ENCODE measurements at regions of chr3 and their contacts with region 1.

Region 1: DNA sequence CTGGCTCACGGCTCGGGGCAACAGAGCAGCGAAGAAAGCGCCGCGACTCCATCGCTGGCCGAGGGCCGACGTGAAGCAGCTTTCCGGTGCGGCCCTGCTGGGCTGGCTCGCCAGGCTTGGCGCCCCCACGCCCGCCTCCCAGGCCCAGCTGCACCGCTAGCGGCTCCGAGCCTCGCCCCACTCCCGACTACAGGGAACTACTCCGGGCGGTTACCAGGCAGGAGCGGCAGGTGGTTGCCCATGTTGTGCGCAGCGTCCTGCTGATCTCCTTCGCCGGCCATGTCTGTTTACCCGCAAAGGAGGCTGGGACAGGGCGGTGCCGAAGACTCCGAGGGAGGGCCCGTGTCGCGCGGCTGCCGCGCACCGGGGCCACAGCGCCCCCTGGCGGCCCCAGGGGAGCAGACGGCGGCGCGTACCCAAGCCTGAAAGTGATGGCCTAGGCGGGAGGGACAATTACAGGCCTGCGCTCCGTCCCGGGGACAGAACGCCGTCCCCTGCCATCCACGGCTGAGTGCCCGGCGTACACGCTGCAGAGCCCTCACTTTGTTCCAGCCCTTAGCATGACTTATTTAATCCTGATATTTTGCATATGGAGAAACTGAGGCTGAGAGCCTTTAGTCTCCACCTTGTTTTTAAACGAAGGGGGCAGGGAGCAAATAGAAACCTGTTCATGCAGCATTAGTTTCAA is at the start of gene CRBN:
- DNase-seq: peak; percentile 80 to 94 (median 88)
- ATAC-seq: peak; percentile 97
- H3K4me3 Mint-ChIP-seq: peak within 1 kb of the TSS; percentile 82 to 97 (median 94)
- H3K27ac Mint-ChIP-seq: peak within 1 kb of the TSS; percentile 87 to 96 (median 92)
- H3K4me1 Mint-ChIP-seq: peaks cover 25 to 46% (median 43%) of the 10 kb centered on the region in 4 donors
- H3K27me3 Mint-ChIP-seq: no peaks in the 10 kb centered on the region
- polyA plus RNA-seq, gene CRBN: 149 to 194 (median 172) TPM

Region 2: GRCh38 chr3:3191675-3192285 is 12.2 kb after region 1 on chr3:
- POLR2A ChIA-PET with region 1: interaction called, 21 read pairs
- DNase-seq: peak in 4 of 10 donors; percentile 8 to 52 (median 42)
- ATAC-seq: peak; percentile 91 to 93
- H3K4me3 Mint-ChIP-seq: peak overlapping the region; percentile 61 to 82 (median 74)
- H3K27ac Mint-ChIP-seq: peak overlapping the region; percentile 87 to 98 (median 93)
- H3K4me1 Mint-ChIP-seq: peaks cover 22 to 50% (median 45%) of the 10 kb centered on the region in 4 donors
- H3K27me3 Mint-ChIP-seq: no peaks in the 10 kb centered on the region